GM18951 (cell line): ENCODE measurements at regions of chr1 and their contacts with region 1.

Region 1: DNA sequence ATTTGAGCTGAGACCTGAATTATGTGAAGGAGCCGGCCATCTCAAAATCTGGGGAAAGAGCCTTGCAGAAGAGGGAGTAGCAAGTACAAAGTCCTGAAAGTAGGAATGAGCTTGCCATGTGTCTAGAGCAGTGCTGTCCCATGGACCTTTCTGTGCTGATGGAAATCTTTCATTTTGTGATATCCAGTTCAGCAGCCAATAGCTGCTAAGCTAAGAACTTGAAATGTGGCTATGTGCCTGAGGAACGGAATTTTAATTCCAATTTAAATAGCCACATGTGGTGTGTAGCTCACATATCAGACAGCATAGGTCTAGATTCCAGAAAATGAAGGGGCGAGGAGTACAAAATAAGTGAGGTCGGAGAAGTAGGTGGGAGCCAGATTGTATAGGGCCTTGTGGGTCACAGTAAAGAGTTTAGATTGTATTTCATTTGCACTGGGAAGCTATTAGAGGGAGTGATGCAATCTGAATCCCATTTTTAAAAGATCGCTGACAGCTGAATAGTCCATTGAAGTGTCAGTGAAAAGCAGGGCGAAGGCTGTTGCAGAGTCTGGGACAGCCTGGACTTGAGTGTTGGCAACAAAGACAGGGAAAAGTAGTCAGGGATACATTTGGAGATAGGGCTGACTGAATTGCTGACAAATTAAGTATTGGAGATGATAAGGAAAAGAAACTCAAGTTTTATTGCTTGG is 80.3 kb downstream of the TMEM200B start:
- POLR2A ChIP-seq: no peak

Region 2: GRCh38 chr1:29100487-29100886 is 57.1 kb after region 1 on chr1:
- in situ Hi-C with region 1: loop called (anchors 5 kb)
- POLR2A ChIP-seq: no peak

Region 3: GRCh38 chr1:29390491-29391361 is 347.3 kb after region 1 on chr1:
- in situ Hi-C with region 1: no loop called
- POLR2A ChIP-seq: no peak